ENCODE measurements at regions of chr7 and their contacts with region 1.

Region 1: DNA sequence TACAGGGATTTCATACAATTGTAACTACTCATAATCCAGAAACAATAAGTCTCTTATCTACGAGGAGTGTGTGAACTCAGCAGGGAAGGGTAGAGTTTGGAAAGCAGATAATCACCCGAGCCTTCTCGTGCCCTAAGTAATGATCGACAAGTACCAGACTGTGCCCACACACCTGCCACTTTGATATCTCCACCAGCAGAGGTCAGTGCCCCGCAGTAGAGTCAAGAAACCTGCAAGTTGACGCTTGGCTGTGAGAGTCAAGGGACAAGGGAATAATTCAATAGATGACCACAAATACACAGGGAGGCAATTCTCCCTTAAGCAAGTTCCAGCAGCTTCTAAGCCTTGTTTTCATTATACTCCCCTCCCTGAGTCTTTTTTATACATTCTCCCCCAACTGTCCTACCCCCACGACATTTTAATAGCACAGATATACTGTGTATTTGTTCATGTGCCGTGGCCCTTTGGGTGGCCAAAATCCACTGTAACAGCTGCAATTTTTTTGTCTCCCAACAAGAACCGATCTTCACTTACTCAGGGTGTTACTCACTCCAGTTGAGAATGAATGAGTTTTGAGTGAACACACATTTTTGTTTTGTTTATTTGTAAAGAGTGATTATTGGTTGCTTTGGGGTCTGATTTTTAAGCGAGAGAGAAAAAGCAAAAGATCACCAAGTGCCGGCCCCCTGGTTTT is 106.9 kb upstream of the RHEB start:
- DNase-seq: peak in 4 of 5 donors; percentile 28 to 64 (median 46)
- ATAC-seq: peak; percentile 26 to 66 (median 58)
- H3K4me3 ChIP-seq: no peak overlapping the region
- H3K27ac ChIP-seq: peak overlapping the region in 4 of 12 donors; percentile 17 to 50 (median 26)
- H3K4me1 ChIP-seq: peaks cover 0 to 64% (median 30%) of the 10 kb centered on the region in 12 donors
- H3K27me3 ChIP-seq: no peaks in the 10 kb centered on the region
- CTCF ChIP-seq: peak in 11 of 12 donors; percentile 21 to 61 (median 45)
- POLR2A ChIP-seq: no peak

Region 2: GRCh38 chr7:151539088-151539671 is 87.4 kb before region 1 on chr7:
- intact Hi-C with region 1: no loop called
- DNase-seq: peak in 3 of 5 donors; percentile 26 to 50 (median 45)
- ATAC-seq: peak; percentile 76 to 92 (median 84)
- H3K4me3 ChIP-seq: no peak overlapping the region
- H3K27ac ChIP-seq: peak overlapping the region in 2 of 12 donors; percentile 4 to 69
- H3K4me1 ChIP-seq: peaks cover 0 to 19% (median 8%) of the 10 kb centered on the region in 12 donors
- H3K27me3 ChIP-seq: no peaks in the 10 kb centered on the region
- CTCF ChIP-seq: no peak
- POLR2A ChIP-seq: no peak

Region 3: DNA sequence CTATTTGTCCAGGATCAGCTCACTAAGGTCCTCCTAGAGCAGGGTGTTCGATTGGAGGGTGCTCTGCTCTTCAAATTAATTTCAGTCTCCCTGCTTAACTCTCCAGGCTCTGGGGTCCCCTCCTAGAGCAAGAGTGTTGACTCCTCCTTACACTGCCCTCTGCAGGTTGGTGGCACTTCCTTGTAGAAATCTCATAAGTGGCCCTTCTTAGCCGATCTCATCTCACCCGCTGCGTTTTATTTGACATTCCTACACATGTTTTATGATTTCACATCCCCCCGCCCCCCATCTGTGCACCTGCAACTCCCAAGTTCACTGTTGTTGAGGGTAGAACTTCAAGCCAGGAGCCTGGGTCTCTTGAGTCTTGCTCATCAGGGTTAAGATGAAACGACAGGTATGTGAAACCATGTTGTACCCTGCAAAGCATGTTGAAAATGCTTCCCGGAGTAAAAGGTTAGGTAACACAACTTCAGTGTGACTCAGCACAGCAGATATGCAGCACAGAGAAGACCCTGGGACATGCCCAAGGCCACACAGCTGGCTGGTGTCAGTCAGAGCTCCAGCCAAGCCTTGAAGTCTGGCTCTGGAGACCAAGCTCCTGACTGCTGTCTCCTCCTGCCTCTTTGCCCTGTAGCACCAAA is 79.2 kb after region 1 on chr7:
- intact Hi-C with region 1: loop called in 7 of 10 experiments (anchors 1 to 10 kb)
- DNase-seq: peak in 1 of 5 donors; percentile 38
- ATAC-seq: peak; percentile 29 to 68 (median 52)
- H3K4me3 ChIP-seq: peak overlapping the region in 6 of 12 donors; percentile 3 to 41 (median 19)
- H3K27ac ChIP-seq: peak overlapping the region in 6 of 12 donors; percentile 2 to 88 (median 24)
- H3K4me1 ChIP-seq: peaks cover 0 to 50% (median 17%) of the 10 kb centered on the region in 12 donors
- H3K27me3 ChIP-seq: no peaks in the 10 kb centered on the region
- CTCF ChIP-seq: peak in 11 of 12 donors; percentile 34 to 67 (median 56)
- POLR2A ChIP-seq: no peak

Region 4: GRCh38 chr7:151754142-151754590 is 127.6 kb after region 1 on chr7:
- intact Hi-C with region 1: loop called in 8 of 10 experiments (anchors 2 to 10 kb)
- DNase-seq: peak; percentile 79 to 88 (median 81)
- ATAC-seq: peak; percentile 86 to 93 (median 92)
- H3K4me3 ChIP-seq: no peak overlapping the region
- H3K27ac ChIP-seq: peak overlapping the region; percentile 8 to 94 (median 76)
- H3K4me1 ChIP-seq: peaks cover 0 to 43% (median 24%) of the 10 kb centered on the region in 12 donors
- H3K27me3 ChIP-seq: no peaks in the 10 kb centered on the region
- CTCF ChIP-seq: peak; percentile 72 to 91 (median 84)
- POLR2A ChIP-seq: no peak

Region 5: GRCh38 chr7:151851145-151851751 is 224.7 kb after region 1 on chr7:
- intact Hi-C with region 1: no loop called
- DNase-seq: peak in 2 of 5 donors; percentile 46 to 55
- ATAC-seq: peak; percentile 40 to 58 (median 40)
- H3K4me3 ChIP-seq: peak overlapping the region in 5 of 12 donors; percentile 2 to 43 (median 15)
- H3K27ac ChIP-seq: peak overlapping the region in 3 of 12 donors; percentile 5 to 85 (median 25)
- H3K4me1 ChIP-seq: peaks cover 0 to 39% (median 4%) of the 10 kb centered on the region in 12 donors
- H3K27me3 ChIP-seq: no peaks in the 10 kb centered on the region
- CTCF ChIP-seq: no peak
- POLR2A ChIP-seq: no peak